Naive thymus-derived CD4-positive, alpha-beta T cell (primary cell): ENCODE measurements at regions of chr3 and their contacts with region 1.

Region 1: DNA sequence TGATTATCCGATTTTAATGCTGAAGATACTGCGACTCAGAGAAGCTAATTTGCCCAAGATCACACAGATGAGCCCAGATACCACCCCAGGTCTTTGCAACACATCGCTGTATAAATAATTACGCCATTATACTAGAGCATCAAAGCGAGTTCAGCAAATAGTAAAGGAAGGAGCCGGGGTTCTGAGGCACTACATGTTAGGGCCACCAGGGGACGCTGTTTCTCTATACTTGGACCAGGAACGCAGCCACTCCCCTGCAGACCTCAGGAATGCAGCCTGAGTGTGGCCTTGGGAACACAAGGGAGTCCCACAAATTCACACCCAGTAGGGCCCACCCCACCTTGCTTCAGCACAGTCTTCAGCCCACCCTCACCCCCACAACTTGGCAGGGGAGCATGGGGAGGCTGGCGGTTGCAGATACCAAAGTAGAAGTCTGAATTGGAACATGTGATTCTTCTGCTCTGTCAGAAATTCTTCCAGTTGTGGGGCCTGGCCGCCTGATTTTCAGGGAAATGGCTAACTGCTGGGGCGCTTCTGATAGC is 57.8 kb upstream of the RYK start:
- DNase-seq: peak; percentile 52 to 76 (median 69)
- ATAC-seq: peak; percentile 94
- H3K4me3 ChIP-seq: no peak overlapping the region
- H3K4me3 Mint-ChIP-seq: peak overlapping the region in 6 of 10 donors; percentile 27 to 80 (median 32)
- H3K27ac ChIP-seq: no peak overlapping the region
- H3K27ac Mint-ChIP-seq: peak overlapping the region in 2 of 9 donors; percentile 7 to 59
- H3K4me1 ChIP-seq: no peaks in the 10 kb centered on the region
- H3K4me1 Mint-ChIP-seq: peaks cover 0 to 10% (median 5%) of the 10 kb centered on the region in 7 donors
- H3K27me3 ChIP-seq: no peaks in the 10 kb centered on the region
- H3K27me3 Mint-ChIP-seq: peaks cover 28 to 73% (median 31%) of the 10 kb centered on the region in 5 donors

Region 2: DNA sequence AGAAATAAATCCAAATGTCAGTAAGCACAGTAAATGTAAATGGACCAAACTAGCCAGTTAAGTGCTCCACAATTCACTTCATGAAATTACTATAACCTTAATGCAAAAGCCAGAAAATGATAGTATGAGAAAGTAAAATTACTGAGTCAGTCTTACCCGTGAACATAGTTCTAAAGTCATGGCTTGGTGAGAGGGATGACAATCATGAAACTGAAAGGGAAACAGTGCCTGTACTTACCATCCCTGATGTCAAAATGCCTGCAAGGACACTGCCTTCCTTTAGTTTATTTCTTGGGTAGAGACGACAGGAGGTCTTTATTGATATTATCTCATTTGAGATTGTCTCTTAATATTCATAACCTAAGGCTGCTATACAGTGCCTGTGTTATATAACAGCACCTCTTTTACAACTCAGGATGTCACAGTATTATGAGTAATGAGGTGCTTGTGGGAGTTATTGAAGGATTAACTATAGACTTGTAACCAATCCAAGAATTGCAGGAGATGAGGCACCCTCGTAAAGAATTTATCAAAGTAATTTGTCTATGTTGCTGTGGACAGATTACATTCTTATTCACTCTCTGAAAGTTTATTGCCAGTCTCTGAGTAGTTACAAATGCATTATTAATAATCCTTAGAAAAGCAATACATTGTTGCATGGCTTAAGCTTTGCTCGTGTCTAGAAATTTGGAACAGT is 1051.5 kb before region 1 on chr3:
- CTCF ChIA-PET with region 1: no interaction called
- POLR2A ChIA-PET with region 1: no interaction called
- intact Hi-C with region 1: no loop called
- DNase-seq: no peak
- ATAC-seq: no peak
- H3K4me3 ChIP-seq: no peak overlapping the region
- H3K4me3 Mint-ChIP-seq: no peak overlapping the region
- H3K27ac ChIP-seq: no peak overlapping the region
- H3K27ac Mint-ChIP-seq: no peak overlapping the region
- H3K4me1 ChIP-seq: no peaks in the 10 kb centered on the region
- H3K4me1 Mint-ChIP-seq: no peaks in the 10 kb centered on the region
- H3K27me3 ChIP-seq: no peaks in the 10 kb centered on the region
- H3K27me3 Mint-ChIP-seq: peaks cover 2 to 20% (median 11%) of the 10 kb centered on the region in 5 donors

Region 3: DNA sequence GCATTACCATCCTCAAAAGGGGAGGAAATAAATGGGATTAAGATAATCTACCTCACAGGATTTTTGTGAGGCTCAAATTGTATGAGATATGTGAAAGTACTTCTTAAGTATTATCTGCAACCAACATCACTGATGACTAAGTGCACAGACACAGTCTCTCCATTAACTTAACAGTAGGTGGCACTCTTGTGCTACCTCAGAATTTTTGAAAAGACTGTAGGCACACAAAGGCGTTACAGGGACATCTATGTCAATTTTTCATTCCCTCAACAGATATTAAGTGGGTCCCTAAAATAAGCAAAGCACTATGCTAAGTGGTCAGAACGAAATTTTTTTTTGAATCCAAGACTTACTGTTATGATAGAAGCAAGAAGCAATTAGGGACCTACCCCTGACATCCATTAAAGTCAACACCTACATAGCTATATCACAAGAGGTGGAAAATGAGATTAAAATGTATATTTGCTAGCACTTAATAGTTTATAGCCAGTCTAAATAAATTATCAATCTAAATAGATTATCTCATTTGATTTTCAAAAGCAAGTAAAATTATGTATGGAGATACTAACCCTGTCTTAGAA is 110.7 kb before region 1 on chr3:
- CTCF ChIA-PET with region 1: no interaction called
- POLR2A ChIA-PET with region 1: no interaction called
- intact Hi-C with region 1: loop called (anchors 1 to 5 kb)
- DNase-seq: peak in 7 of 9 donors; percentile 24 to 55 (median 42)
- ATAC-seq: peak; percentile 83
- H3K4me3 ChIP-seq: no peak overlapping the region
- H3K4me3 Mint-ChIP-seq: no peak overlapping the region
- H3K27ac ChIP-seq: no peak overlapping the region
- H3K27ac Mint-ChIP-seq: no peak overlapping the region
- H3K4me1 ChIP-seq: no peaks in the 10 kb centered on the region
- H3K4me1 Mint-ChIP-seq: peaks cover 0 to 2% (median 0%) of the 10 kb centered on the region in 7 donors
- H3K27me3 ChIP-seq: no peaks in the 10 kb centered on the region
- H3K27me3 Mint-ChIP-seq: no peaks in the 10 kb centered on the region

Region 4: GRCh38 chr3:134250717-134251220 is 57.7 kb before region 1 on chr3 and contains the start of gene RYK:
- CTCF ChIA-PET with region 1: no interaction called
- POLR2A ChIA-PET with region 1: no interaction called
- intact Hi-C with region 1: loop called in 1 of 2 experiments (anchors 5 kb)
- DNase-seq: peak; percentile 65 to 85 (median 79)
- ATAC-seq: peak; percentile 93
- H3K4me3 ChIP-seq: peak within 1 kb of the TSS; percentile 78
- H3K4me3 Mint-ChIP-seq: peak within 1 kb of the TSS; percentile 90 to 99 (median 96)
- H3K27ac ChIP-seq: peak within 1 kb of the TSS; percentile 86
- H3K27ac Mint-ChIP-seq: peak within 1 kb of the TSS; percentile 72 to 99 (median 95)
- H3K4me1 ChIP-seq: peaks cover 12 to 14% of the 10 kb centered on the region in 2 donors
- H3K4me1 Mint-ChIP-seq: peaks cover 25 to 62% (median 57%) of the 10 kb centered on the region in 7 donors
- H3K27me3 ChIP-seq: no peaks in the 10 kb centered on the region
- H3K27me3 Mint-ChIP-seq: peaks cover 0 to 54% (median 0%) of the 10 kb centered on the region in 5 donors
- total RNA-seq, gene RYK: 10.7 to 53.5 (median 50.5) TPM

Region 5: DNA sequence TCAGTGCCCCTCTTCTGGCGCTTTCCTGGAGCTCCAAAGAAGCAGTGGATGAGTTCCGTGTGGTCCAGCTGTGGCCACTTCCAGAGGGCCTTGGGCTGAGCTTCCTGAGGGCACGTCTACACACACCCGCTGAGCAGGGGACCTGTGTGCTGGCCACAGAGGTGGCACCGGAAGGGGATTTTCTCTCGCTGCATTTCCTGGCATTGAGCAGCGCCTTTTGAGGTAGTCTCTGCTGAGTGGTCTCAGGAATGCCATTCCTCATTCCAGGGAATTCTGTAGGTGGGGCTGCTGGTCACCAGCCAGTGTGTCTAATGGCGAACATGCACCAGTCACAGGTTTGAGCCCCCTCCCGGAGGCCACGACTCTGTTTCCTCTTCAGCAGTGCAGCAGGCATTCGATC is 17.7 kb after region 1 on chr3:
- CTCF ChIA-PET with region 1: no interaction called
- POLR2A ChIA-PET with region 1: no interaction called
- intact Hi-C with region 1: no loop called
- DNase-seq: no peak
- ATAC-seq: no peak
- H3K4me3 ChIP-seq: no peak overlapping the region
- H3K4me3 Mint-ChIP-seq: no peak overlapping the region
- H3K27ac ChIP-seq: no peak overlapping the region
- H3K27ac Mint-ChIP-seq: no peak overlapping the region
- H3K4me1 ChIP-seq: no peaks in the 10 kb centered on the region
- H3K4me1 Mint-ChIP-seq: no peaks in the 10 kb centered on the region
- H3K27me3 ChIP-seq: no peaks in the 10 kb centered on the region
- H3K27me3 Mint-ChIP-seq: peaks cover 0 to 10% (median 5%) of the 10 kb centered on the region in 5 donors

Region 6: GRCh38 chr3:134373994-134374790 is 65.8 kb after region 1 on chr3 and contains the start of gene AMOTL2:
- CTCF ChIA-PET with region 1: interaction called, 3 read pairs
- POLR2A ChIA-PET with region 1: no interaction called
- intact Hi-C with region 1: loop called (anchors 1 kb)
- DNase-seq: peak in 1 of 9 donors; percentile 23
- ATAC-seq: peak; percentile 39
- H3K4me3 ChIP-seq: peak within 1 kb of the TSS; percentile 41
- H3K4me3 Mint-ChIP-seq: peak within 1 kb of the TSS; percentile 78 to 90 (median 84)
- H3K27ac ChIP-seq: no peak within 1 kb of the TSS
- H3K27ac Mint-ChIP-seq: no peak within 1 kb of the TSS
- H3K4me1 ChIP-seq: no peaks in the 10 kb centered on the region
- H3K4me1 Mint-ChIP-seq: peaks cover 7 to 13% (median 11%) of the 10 kb centered on the region in 7 donors
- H3K27me3 ChIP-seq: peaks cover 0 to 3% of the 10 kb centered on the region in 2 donors
- H3K27me3 Mint-ChIP-seq: peaks cover 22 to 63% (median 37%) of the 10 kb centered on the region in 5 donors
- total RNA-seq, gene AMOTL2: not detected

Region 7: DNA sequence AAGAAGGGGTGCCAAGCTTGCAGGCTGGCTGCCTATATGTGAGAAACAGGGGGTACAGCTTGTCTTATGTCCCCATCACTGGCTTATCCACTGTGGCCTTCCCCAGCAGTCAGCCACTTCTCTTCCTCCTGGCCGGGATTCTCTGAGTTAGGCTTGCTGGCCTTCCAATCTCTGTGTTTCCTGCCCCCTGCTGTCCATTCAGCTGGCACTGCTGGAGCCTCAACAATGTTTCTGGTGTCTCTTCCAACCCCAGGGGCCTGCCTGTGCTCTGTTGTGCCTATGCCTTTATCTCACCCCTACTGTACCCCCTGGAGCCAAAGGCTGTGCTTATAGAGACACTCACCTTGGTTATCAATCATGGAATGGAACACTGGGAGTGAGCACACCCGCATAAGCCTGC is 140.9 kb after region 1 on chr3:
- CTCF ChIA-PET with region 1: no interaction called
- POLR2A ChIA-PET with region 1: no interaction called
- intact Hi-C with region 1: loop called in 1 of 2 experiments (anchors 1 kb)
- DNase-seq: peak in 1 of 9 donors; percentile 4
- ATAC-seq: no peak
- H3K4me3 ChIP-seq: no peak overlapping the region
- H3K4me3 Mint-ChIP-seq: no peak overlapping the region
- H3K27ac ChIP-seq: no peak overlapping the region
- H3K27ac Mint-ChIP-seq: no peak overlapping the region
- H3K4me1 ChIP-seq: no peaks in the 10 kb centered on the region
- H3K4me1 Mint-ChIP-seq: peaks cover 0 to 5% (median 0%) of the 10 kb centered on the region in 7 donors
- H3K27me3 ChIP-seq: no peaks in the 10 kb centered on the region
- H3K27me3 Mint-ChIP-seq: peaks cover 14 to 29% (median 23%) of the 10 kb centered on the region in 5 donors

Region 8: GRCh38 chr3:134473868-134474546 is 165.6 kb after region 1 on chr3:
- CTCF ChIA-PET with region 1: interaction called, 30 read pairs
- POLR2A ChIA-PET with region 1: no interaction called
- intact Hi-C with region 1: loop called (anchors 1 kb)
- DNase-seq: peak; percentile 50 to 81 (median 74)
- ATAC-seq: peak; percentile 89
- H3K4me3 ChIP-seq: no peak overlapping the region
- H3K4me3 Mint-ChIP-seq: no peak overlapping the region
- H3K27ac ChIP-seq: no peak overlapping the region
- H3K27ac Mint-ChIP-seq: peak overlapping the region in 1 of 9 donors; percentile 32
- H3K4me1 ChIP-seq: no peaks in the 10 kb centered on the region
- H3K4me1 Mint-ChIP-seq: peaks cover 0 to 9% (median 0%) of the 10 kb centered on the region in 7 donors
- H3K27me3 ChIP-seq: no peaks in the 10 kb centered on the region
- H3K27me3 Mint-ChIP-seq: no peaks in the 10 kb centered on the region

Region 9: GRCh38 chr3:134718726-134719125 is 410.3 kb after region 1 on chr3:
- CTCF ChIA-PET with region 1: no interaction called
- POLR2A ChIA-PET with region 1: no interaction called
- intact Hi-C with region 1: no loop called
- DNase-seq: no peak
- ATAC-seq: no peak
- H3K4me3 ChIP-seq: no peak overlapping the region
- H3K4me3 Mint-ChIP-seq: no peak overlapping the region
- H3K27ac ChIP-seq: no peak overlapping the region
- H3K27ac Mint-ChIP-seq: no peak overlapping the region
- H3K4me1 ChIP-seq: no peaks in the 10 kb centered on the region
- H3K4me1 Mint-ChIP-seq: peaks cover 0 to 2% (median 0%) of the 10 kb centered on the region in 7 donors
- H3K27me3 ChIP-seq: no peaks in the 10 kb centered on the region
- H3K27me3 Mint-ChIP-seq: peaks cover 0 to 29% (median 8%) of the 10 kb centered on the region in 5 donors

Region 10: GRCh38 chr3:136042608-136043221 is 1734.3 kb after region 1 on chr3:
- CTCF ChIA-PET with region 1: no interaction called
- POLR2A ChIA-PET with region 1: no interaction called
- intact Hi-C with region 1: loop called in 1 of 2 experiments (anchors 5 kb)
- DNase-seq: peak in 3 of 9 donors; percentile 2 to 14 (median 10)
- ATAC-seq: no peak
- H3K4me3 ChIP-seq: no peak overlapping the region
- H3K4me3 Mint-ChIP-seq: no peak overlapping the region
- H3K27ac ChIP-seq: no peak overlapping the region
- H3K27ac Mint-ChIP-seq: no peak overlapping the region
- H3K4me1 ChIP-seq: no peaks in the 10 kb centered on the region
- H3K4me1 Mint-ChIP-seq: no peaks in the 10 kb centered on the region
- H3K27me3 ChIP-seq: peaks cover 0 to 5% of the 10 kb centered on the region in 2 donors
- H3K27me3 Mint-ChIP-seq: peaks cover 5 to 25% (median 15%) of the 10 kb centered on the region in 5 donors